GM10248 (cell line): ENCODE measurements at regions of chr10 and their contacts with region 1.

Region 1: GRCh38 chr10:93352638-93353383 is 129.3 kb downstream of the MYOF start:
- DNase-seq: peak; percentile 48
- CTCF ChIP-seq: peak; percentile 54

Region 2: GRCh38 chr10:92886334-92886961 is 466.4 kb before region 1 on chr10:
- CTCF ChIA-PET with region 1: interaction called, 14 read pairs
- POLR2A ChIA-PET with region 1: no interaction called
- DNase-seq: no peak
- CTCF ChIP-seq: no peak

Region 3: DNA sequence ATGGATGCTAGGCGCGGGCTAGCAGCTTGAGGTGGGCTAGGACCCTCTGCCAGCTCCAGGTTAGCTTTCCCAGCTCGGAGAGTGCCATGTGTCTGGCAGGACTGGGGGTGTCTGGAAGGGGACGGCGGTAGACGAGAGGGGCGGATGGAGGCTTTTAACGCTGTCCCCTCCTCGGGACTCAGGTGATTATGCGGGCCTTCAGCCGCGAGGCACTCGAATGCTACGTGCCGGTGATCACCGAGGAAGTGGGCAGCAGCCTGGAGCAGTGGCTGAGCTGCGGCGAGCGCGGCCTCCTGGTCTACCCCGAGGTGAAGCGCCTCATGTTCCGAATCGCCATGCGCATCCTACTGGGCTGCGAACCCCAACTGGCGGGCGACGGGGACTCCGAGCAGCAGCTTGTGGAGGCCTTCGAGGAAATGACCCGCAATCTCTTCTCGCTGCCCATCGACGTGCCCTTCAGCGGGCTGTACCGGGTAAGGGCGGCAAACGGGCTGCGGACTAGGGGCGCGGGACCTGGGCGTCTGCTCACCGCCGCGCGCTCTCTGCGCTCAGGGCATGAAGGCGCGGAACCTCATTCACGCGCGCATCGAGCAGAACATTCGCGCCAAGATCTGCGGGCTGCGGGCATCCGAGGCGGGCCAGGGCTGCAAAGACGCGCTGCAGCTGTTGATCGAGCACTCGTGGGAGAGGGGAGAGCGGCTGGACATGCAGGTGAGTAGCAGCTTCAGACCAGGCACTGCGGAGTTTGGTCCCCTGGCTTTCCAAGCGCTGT is 278.0 kb before region 1 on chr10:
- CTCF ChIA-PET with region 1: interaction called, 17 read pairs
- POLR2A ChIA-PET with region 1: no interaction called
- DNase-seq: no peak
- CTCF ChIP-seq: no peak

Region 4: GRCh38 chr10:93337309-93337721 is 15.5 kb before region 1 on chr10:
- CTCF ChIA-PET with region 1: interaction called, 10 read pairs
- POLR2A ChIA-PET with region 1: no interaction called
- DNase-seq: no peak
- CTCF ChIP-seq: no peak

Region 5: GRCh38 chr10:93386631-93387369 is 34.0 kb after region 1 on chr10:
- CTCF ChIA-PET with region 1: interaction called, 10 read pairs
- POLR2A ChIA-PET with region 1: no interaction called
- DNase-seq: peak; percentile 21
- CTCF ChIP-seq: no peak